Activated T-helper 2 cell treated with anti-CD3 and anti-CD28 coated beads, Interferon-gamma antibody, Interleukin-2, Interleukin-4, amounts not matched to agents 10 μg/mL and 5 μg/mL and 100 μg/mL, durations not matched to agents 14 hours and 24 hours and 36 hours (primary cell): ENCODE measurements at regions of chr4 and their contacts with region 1.

Region 1: GRCh38 chr4:105453550-105454205 is 20.2 kb downstream of the PPA2 start:
- DNase-seq: no peak
- H3K4me3 Mint-ChIP-seq: no peak overlapping the region
- H3K27ac Mint-ChIP-seq: peak overlapping the region; percentile 57
- H3K4me1 Mint-ChIP-seq: peaks cover 22% of the 10 kb centered on the region
- H3K27me3 Mint-ChIP-seq: no peaks in the 10 kb centered on the region

Region 2: GRCh38 chr4:105191621-105192210 is 262.0 kb before region 1 on chr4:
- intact Hi-C with region 1: loop called (anchors 5 kb)
- DNase-seq: no peak
- H3K4me3 Mint-ChIP-seq: no peak overlapping the region
- H3K27ac Mint-ChIP-seq: peak overlapping the region; percentile 56
- H3K4me1 Mint-ChIP-seq: peaks cover 51% of the 10 kb centered on the region
- H3K27me3 Mint-ChIP-seq: no peaks in the 10 kb centered on the region